ENCODE measurements at regions of chr4 and their contacts with region 1.

Region 1: DNA sequence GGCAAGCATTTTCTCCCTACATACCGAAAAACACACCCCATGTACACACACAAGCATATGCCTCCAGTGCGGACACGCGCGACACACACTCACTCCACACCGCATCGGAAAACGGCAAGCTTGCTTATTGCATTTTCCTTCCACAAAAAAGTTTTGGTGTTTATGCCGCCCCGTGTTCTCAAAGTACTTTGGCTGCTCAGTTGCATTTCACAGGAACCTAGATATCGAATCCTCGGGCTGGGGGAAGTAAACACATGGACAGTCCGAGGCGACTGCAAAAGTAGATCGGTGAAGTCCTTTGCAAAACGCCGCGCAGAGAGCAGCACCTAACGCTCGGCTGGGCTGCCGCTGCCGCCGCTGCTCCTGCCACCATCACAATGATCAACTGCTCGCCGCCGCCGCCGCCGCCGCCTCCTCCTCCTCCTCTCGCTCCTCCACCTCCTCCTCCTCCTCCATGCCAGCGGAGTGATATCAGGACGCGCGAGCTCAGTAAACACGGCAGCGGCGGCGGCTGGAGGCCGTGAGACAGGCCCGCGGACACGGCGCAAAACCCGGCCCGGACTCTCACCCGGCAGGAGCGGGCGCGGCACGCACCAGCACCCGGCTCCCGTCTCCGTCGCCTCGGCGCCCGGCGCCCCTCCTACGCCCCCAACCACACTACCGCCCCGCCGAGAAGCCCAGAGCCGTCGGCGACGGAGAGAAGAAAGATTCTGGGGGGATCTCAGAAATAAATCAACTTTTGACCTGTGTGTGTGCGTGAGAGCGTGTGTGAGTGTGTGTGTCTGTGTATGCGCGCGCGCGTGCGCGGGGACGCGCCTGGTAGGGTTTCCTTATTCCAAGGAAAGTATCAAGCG is at the start of gene MAML3:
- DNase-seq: peak; percentile 96 to 97
- ATAC-seq: peak; percentile 74 to 88 (median 80)
- H3K4me3 ChIP-seq: peak within 1 kb of the TSS; percentile 80
- H3K27ac ChIP-seq: peak within 1 kb of the TSS; percentile 97
- H3K4me1 ChIP-seq: peaks cover 8% of the 10 kb centered on the region
- H3K27me3 ChIP-seq: no peaks in the 10 kb centered on the region
- CTCF ChIP-seq: no peak
- total RNA-seq, gene MAML3: 0.74 to 2.7 (median 1.4) TPM

Region 2: GRCh38 chr4:139660568-139661043 is 493.3 kb before region 1 on chr4:
- intact Hi-C with region 1: loop called in 1 of 2 experiments (anchors 5 kb)
- DNase-seq: no peak
- ATAC-seq: no peak
- H3K4me3 ChIP-seq: no peak overlapping the region
- H3K27ac ChIP-seq: no peak overlapping the region
- H3K4me1 ChIP-seq: peaks cover 15% of the 10 kb centered on the region
- H3K27me3 ChIP-seq: no peaks in the 10 kb centered on the region
- CTCF ChIP-seq: no peak

Region 3: DNA sequence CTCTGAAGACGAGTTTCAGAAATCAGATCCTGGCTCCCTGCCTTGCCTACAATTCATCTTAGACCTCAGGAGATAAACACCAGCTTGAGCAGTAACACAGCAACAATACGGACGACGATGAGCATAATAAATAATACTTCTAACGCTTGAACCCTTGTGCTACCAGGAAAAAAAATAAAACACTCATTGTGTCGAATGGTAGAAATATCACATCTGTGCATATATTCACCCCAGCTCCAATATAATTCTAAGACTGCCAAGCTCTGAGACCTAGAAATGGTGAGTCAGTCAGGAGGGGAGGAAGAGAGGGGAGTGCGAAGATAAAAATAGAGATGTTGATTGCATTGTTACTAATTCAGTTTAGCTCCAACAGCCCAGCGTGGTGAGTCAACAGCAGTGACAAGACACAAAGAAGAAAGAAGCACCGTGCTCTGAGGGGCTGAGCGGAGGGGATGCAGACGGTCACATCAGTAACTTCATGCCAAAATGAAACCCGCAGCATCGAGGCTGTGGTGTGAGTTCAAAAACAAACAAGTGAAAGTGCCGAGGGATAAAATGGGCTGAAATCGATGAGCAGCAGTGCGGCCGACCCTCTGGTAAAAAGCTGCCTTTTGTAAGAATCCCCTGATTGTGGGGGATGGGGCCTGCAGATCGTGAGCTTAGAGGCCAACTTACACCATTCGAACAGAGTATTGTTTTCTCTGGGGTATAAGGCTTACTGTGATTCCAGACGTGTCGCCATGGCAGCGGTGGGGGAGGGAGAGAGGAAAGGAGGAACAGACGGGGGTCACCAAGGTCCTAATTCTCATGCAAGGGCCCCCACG is 338.0 kb before region 1 on chr4:
- intact Hi-C with region 1: loop called in 1 of 2 experiments (anchors 5 kb)
- DNase-seq: peak; percentile 56 to 78
- ATAC-seq: peak; percentile 90 to 93 (median 92)
- H3K4me3 ChIP-seq: peak overlapping the region; percentile 65
- H3K27ac ChIP-seq: peak overlapping the region; percentile 87
- H3K4me1 ChIP-seq: peaks cover 36% of the 10 kb centered on the region
- H3K27me3 ChIP-seq: no peaks in the 10 kb centered on the region
- CTCF ChIP-seq: no peak

Region 4: GRCh38 chr4:140012688-140013486 is 141.1 kb before region 1 on chr4:
- intact Hi-C with region 1: loop called in 1 of 2 experiments (anchors 2 kb)
- DNase-seq: peak; percentile 33 to 60
- ATAC-seq: peak; percentile 79 to 95 (median 84)
- H3K4me3 ChIP-seq: peak overlapping the region; percentile 12
- H3K27ac ChIP-seq: no peak overlapping the region
- H3K4me1 ChIP-seq: no peaks in the 10 kb centered on the region
- H3K27me3 ChIP-seq: no peaks in the 10 kb centered on the region
- CTCF ChIP-seq: peak; percentile 50

Region 5: GRCh38 chr4:140095694-140096482 is 58.1 kb before region 1 on chr4:
- intact Hi-C with region 1: loop called (anchors 2 to 5 kb)
- DNase-seq: peak in 1 of 2 donors; percentile 26
- ATAC-seq: peak in 3 of 4 donors; percentile 25 to 64 (median 45)
- H3K4me3 ChIP-seq: peak overlapping the region; percentile 19
- H3K27ac ChIP-seq: peak overlapping the region; percentile 84
- H3K4me1 ChIP-seq: peaks cover 58% of the 10 kb centered on the region
- H3K27me3 ChIP-seq: no peaks in the 10 kb centered on the region
- CTCF ChIP-seq: no peak

Region 6: DNA sequence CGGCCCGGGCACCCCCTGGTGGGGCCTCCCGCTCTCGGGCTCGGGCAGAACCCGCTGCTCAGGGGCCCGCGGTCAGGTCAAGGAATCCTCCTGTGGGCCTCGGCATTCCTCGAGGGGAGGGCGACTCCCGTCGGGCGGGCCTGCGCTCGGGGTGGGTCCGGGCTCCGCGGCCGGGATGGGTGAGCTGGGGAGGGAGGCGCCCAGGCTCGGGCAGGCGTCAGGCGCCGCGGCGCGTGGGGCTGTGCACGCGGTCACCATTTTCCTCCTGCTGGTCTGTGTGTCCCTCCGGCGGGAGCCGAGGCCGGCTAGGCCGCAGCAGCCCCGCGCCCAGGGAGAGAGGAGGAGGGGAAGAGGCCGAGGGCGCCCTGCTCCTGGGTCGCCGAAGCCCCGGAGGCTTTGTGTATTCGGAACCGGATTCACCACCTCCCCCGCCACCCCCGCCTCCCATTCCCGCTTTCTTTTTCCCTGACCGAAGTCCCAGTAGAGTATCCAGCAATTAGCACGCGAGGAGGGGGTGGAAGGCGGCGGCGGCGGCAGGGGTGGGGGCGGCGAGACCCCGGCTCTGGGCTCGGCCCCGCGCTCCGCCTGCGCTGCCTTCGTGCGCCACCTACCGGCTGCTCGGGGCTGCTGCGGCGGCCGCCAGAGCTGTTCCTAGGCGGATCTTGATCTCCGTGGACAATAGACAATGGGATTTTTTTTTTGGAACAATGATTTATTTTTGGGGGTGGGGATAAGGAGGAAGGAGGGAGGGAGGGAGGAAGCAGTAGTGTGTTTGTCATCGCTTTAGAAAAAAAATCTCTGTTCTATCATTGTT is 99.0 kb after region 1 on chr4:
- intact Hi-C with region 1: loop called (anchors 1 to 5 kb)
- DNase-seq: peak; percentile 78 to 83
- ATAC-seq: peak; percentile 82 to 88 (median 86)
- H3K4me3 ChIP-seq: peak overlapping the region; percentile 85
- H3K27ac ChIP-seq: peak overlapping the region; percentile 89
- H3K4me1 ChIP-seq: peaks cover 16% of the 10 kb centered on the region
- H3K27me3 ChIP-seq: no peaks in the 10 kb centered on the region
- CTCF ChIP-seq: peak; percentile 98

Region 7: GRCh38 chr4:140947507-140947906 is 793.6 kb after region 1 on chr4:
- intact Hi-C with region 1: no loop called
- DNase-seq: peak in 1 of 2 donors; percentile 17
- ATAC-seq: peak in 2 of 4 donors; percentile 44 to 77
- H3K4me3 ChIP-seq: no peak overlapping the region
- H3K27ac ChIP-seq: no peak overlapping the region
- H3K4me1 ChIP-seq: peaks cover 6% of the 10 kb centered on the region
- H3K27me3 ChIP-seq: no peaks in the 10 kb centered on the region
- CTCF ChIP-seq: no peak

Measured in psoas muscle (tissue), 8 donors.